ENCODE measurements at regions of chr2 and their contacts with region 1.

Region 1: DNA sequence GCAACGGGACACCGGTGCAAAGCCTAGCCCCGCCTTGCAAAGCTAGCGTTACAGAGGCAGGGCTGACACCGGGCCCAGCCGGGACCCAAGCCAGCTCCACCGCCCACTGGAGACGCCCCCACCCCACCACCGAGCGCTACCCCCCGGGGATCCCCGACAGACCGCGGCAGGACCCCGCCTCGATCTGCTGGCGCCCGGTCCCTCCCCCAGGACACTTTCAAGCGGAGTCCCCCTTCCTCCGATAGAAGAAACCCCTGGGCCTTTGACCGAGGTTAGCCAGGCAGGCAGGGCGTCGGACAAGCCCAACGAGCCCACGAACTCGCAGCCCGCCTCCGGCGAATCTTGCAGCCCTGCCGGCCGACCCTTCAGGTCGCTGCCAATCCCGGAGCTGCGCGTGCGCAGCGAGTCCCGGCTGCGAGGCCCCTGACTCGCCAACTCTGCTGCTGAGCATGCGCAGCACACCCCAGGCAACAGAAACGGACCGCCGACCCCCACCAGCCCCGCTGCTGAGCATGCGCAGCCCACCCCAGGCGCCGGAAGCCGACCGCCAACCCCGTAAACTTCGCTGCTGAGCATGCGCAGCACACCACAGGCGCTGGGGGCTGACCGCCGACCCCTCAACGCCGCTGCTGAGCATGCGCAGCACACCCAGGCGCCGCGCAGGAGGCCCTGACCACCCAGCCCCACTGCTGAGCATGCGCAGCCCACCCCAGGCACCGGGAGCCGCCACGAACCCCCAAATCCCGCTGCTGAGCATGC is 656 bp downstream of the ADI1 start:
- DNase-seq: peak; percentile 76 to 98 (median 95)

Region 2: DNA sequence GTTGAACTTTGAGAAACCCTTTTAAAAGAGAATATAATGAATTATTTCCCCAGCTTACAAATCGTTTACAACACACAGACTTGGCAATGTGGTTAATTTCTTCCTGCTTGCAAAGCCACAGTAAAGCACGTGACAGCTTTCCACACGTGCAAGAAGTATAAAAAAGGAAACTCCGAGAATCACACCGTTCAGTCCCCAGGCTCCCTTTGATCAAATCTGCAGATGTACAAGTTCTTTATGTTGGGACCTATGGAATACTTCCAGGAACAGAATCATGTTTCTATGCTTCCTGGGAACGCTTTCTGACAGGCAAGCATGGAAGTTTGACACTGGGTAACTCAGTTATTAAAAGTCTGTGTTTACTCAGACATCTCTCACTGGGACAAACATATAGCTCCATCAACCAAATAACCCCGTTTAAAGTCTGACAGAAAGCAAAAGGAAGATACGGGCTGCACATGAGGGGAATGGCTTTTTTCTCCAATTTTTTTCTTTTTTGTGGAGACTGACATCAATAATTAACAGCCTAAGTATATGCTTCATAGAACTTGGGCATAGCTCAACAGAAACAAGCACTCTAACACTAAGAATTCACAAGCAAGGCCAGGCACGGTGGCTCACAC is 275.8 kb before region 1 on chr2:
- intact Hi-C with region 1: no loop called
- DNase-seq: no peak

Region 3: DNA sequence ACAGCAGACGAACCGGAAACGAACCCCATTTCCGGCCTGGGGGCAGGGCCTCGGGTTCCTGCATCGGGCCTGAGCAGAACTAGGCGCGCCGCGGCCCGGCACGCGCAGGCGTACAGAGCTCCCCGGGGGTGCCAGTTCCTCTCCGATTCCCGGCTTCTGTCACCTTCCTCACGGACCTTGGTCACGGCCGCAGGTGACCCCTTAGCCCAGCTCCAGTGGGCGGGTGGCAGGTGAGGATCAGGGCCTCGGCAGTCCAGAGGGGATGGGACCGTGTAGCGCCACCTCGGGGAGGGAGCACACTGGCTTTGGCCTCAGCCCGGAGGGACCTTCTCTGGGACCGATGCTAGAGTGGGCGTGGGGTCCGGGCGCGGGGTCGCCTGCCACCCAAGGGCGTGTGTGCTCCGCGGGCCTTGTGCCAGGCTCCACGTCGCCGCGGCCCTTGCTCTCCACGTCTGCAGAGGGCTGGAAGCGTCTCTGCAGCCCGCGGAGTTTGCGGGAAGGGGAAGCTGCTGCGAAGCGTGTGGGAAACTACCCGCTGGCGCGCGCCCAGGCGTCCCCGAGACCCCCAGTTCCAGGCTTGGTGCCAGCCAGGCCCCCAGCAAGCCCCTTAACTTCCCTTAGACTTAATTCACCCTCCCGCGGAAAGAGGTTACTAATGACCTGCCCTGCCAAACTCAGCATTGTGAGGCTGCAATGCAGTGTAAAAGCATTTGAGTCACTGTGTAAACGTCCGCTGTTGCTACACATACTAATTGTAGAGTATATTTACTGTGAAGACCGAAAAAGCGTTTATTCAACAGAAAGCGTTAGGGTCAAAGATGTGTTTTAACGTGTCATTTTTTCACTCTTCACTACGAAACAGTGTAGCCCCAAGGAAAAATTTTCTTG is 138.8 kb before region 1 on chr2 and contains the start of gene TRAPPC12:
- intact Hi-C with region 1: loop called (anchors 5 kb)
- DNase-seq: peak; percentile 87 to 97 (median 94)

Region 4: GRCh38 chr2:3558205-3559014 is 39.7 kb after region 1 on chr2 and contains the start of gene RNASEH1:
- intact Hi-C with region 1: loop called (anchors 1 kb)
- DNase-seq: peak; percentile 93 to 100 (median 99)

Region 5: DNA sequence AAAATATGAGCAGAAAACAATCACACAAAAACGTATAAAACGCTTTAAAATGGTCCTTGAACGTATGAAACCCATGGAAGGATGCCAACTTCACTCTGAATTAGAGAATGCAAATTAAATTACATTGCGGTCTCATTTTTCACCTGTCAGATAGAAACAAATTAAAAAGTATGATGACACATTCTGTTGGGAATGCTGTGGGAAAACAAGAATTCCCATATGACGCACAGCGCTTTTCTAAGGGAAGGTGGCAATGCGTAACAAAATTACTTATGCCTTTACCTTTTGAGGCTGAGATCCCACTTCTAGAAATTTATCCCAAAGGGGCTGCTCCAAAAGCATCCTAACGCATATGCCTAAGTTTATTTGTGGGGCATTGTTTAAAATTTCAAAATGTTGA is 52.6 kb after region 1 on chr2:
- intact Hi-C with region 1: no loop called
- DNase-seq: no peak

Measured in head of caudate nucleus (tissue), 42 donors.